HCT116 (cell line): ENCODE measurements at regions of chr3 and their contacts with region 1.

Region 1: DNA sequence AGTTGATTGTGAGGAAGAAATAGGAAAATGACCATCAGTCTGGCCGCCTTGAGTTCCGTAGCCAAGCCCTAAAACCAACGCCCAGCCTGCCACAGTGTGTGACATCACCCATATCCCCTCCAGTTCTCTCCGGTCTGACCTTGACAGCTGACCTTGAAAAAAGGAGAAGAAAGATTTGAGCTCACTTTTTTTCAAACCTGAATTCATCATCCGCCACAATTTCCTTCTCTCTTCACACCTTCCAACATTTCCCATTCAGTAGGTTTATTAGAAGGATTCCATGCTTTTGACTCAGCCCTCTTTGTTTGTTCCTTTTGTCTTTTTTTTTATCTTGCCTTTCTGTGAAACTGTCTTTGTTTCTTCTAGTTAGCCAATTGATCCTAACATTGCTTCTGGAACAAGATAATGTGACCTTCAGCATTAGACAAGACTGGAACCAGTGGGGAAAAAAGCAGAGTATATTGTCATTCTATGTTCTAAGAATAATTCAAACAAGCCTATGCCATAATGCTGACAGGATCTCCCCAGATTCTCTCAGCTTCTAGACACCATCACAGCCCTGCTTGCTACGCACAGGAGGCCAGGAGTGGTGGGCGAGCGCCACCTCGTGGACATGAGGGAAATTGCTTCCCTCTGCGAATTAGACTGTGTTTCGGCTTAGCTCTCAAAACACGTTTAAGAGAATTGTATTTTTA is 283.1 kb downstream of the FGF12 start:
- DNase-seq: peak; percentile 36
- ATAC-seq: peak; percentile 92
- H3K4me3 ChIP-seq: no peak overlapping the region
- H3K27ac ChIP-seq: no peak overlapping the region
- H3K4me1 ChIP-seq: no peaks in the 10 kb centered on the region
- H3K27me3 ChIP-seq: peaks cover 64% of the 10 kb centered on the region
- CTCF ChIP-seq: peak; percentile 71 to 99 (median 93)
- POLR2A ChIP-seq: no peak
- RAD21 ChIP-seq: peak; percentile 93

Region 2: DNA sequence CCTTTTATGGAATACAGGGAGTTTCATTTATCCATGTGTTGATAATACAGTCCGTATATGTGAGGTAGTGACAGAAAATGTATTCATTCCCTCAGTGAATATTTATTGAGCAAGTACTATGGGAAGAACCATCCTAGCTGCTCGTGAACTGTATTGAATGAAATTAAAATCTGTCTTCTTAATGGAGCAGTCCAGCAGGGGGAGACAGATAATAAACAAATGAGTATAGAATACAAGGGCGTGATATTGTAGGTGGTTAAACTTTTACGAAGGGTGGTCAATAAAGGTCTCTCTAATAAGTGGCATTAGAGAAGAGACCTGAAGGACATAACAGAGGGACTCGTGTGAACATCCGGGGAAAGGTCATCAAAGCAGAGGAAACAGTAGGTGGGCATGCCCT is 1307.9 kb before region 1 on chr3:
- CTCF ChIA-PET with region 1: interaction called, 4 read pairs
- POLR2A ChIA-PET with region 1: no interaction called
- RAD21 ChIA-PET with region 1: no interaction called
- intact Hi-C with region 1: loop called (anchors 10 kb)
- DNase-seq: peak; percentile 23
- ATAC-seq: peak; percentile 83
- H3K4me3 ChIP-seq: no peak overlapping the region
- H3K27ac ChIP-seq: no peak overlapping the region
- H3K4me1 ChIP-seq: peaks cover under 1 to 6% of the 10 kb centered on the region in 2 experiments; a peak in 3 of 4 replicates
- H3K27me3 ChIP-seq: no peaks in the 10 kb centered on the region
- CTCF ChIP-seq: peak; percentile 42 to 67 (median 54); a peak in 4 of 6 replicates
- POLR2A ChIP-seq: no peak
- RAD21 ChIP-seq: peak; percentile 76

Region 3: DNA sequence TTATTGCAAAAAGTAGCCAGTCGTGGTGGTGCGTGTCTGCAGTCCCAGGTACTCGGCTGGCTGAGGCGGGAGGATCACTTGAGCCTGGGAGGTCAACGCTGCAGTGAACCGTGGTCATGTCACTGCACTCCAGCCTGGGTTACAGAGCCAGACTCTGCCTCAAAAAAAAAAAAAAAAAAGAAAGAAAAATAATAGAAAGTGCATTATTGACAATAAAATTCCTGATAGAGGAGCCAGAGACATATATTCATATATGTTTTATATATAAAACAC is 1026.8 kb before region 1 on chr3:
- CTCF ChIA-PET with region 1: interaction called, 3 read pairs
- POLR2A ChIA-PET with region 1: no interaction called
- RAD21 ChIA-PET with region 1: no interaction called
- intact Hi-C with region 1: loop called (anchors 1 kb)
- DNase-seq: no peak
- ATAC-seq: no peak
- H3K4me3 ChIP-seq: no peak overlapping the region
- H3K27ac ChIP-seq: no peak overlapping the region
- H3K4me1 ChIP-seq: no peaks in the 10 kb centered on the region; a peak in 1 of 4 replicates
- H3K27me3 ChIP-seq: no peaks in the 10 kb centered on the region
- CTCF ChIP-seq: no peak
- POLR2A ChIP-seq: no peak
- RAD21 ChIP-seq: no peak

Region 4: DNA sequence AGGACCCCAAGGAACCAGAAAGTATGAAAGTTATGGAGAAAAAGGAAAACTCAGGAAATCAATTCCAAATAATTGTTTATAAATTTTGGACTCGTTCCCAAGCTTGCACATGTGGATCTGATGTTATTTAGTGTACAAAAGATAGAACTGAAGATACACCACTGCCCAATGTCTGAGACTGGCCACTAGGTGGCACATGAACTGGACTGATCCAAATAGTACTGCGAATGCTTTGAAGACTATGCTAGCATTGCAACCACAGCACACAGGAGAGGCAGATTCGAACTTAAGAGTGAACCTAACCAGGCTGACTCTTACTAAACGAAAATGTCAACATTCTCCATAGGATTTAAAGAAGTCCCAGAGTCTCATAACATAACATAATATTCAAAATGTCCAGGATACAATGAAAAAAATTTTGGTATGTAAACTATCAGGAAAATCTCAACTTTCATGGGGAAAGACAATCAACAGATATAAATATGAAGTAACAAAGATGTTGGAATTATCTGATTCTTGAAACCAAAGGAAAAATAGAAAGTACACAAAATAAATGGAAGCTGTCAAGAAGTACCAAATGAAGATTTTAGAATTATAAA is 313.6 kb before region 1 on chr3:
- CTCF ChIA-PET with region 1: interaction called, 6 read pairs
- POLR2A ChIA-PET with region 1: no interaction called
- RAD21 ChIA-PET with region 1: interaction called in 1 of 2 experiments, 3 read pairs
- intact Hi-C with region 1: loop called (anchors 2 kb)
- DNase-seq: peak; percentile 60
- ATAC-seq: peak; percentile 100
- H3K4me3 ChIP-seq: no peak overlapping the region
- H3K27ac ChIP-seq: no peak overlapping the region
- H3K4me1 ChIP-seq: no peaks in the 10 kb centered on the region
- H3K27me3 ChIP-seq: no peaks in the 10 kb centered on the region
- CTCF ChIP-seq: peak; percentile 42 to 85 (median 82); a peak in 5 of 6 replicates
- POLR2A ChIP-seq: no peak
- RAD21 ChIP-seq: peak; percentile 57

Region 5: GRCh38 chr3:192299921-192300320 is 144.3 kb before region 1 on chr3:
- CTCF ChIA-PET with region 1: no interaction called
- POLR2A ChIA-PET with region 1: no interaction called
- RAD21 ChIA-PET with region 1: no interaction called
- intact Hi-C with region 1: no loop called
- DNase-seq: no peak
- ATAC-seq: 0 out of 2 replicates have a peak, but pooled peaks have one; percentile 47
- H3K4me3 ChIP-seq: no peak overlapping the region
- H3K27ac ChIP-seq: no peak overlapping the region
- H3K4me1 ChIP-seq: no peaks in the 10 kb centered on the region
- H3K27me3 ChIP-seq: peaks cover 40% of the 10 kb centered on the region
- CTCF ChIP-seq: peak in 1 of 3 experiments; percentile 29; a peak in 2 of 6 replicates
- POLR2A ChIP-seq: no peak
- RAD21 ChIP-seq: no peak

Region 6: DNA sequence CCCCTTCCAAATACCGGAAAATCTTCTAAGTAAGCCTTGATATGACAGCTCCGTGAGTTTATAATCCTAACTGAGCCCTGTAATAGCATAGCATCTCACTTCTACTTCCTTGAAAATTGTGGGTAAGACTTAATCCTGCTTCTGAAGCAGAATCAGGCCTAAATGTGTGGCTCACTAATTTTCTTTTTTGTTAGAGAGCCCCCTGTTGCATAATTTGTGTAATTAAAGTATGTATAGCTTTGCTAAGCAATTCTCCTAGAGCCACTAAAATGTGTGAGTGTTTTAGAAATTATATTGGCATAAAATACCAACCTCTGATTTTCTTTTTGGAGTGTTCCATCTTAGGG is 21.3 kb before region 1 on chr3:
- CTCF ChIA-PET with region 1: interaction called, 23 read pairs
- POLR2A ChIA-PET with region 1: no interaction called
- RAD21 ChIA-PET with region 1: no interaction called
- intact Hi-C with region 1: no loop called
- DNase-seq: no peak
- ATAC-seq: peak; percentile 46; the same call in 1 of the 2 replicates
- H3K4me3 ChIP-seq: no peak overlapping the region
- H3K27ac ChIP-seq: no peak overlapping the region
- H3K4me1 ChIP-seq: no peaks in the 10 kb centered on the region
- H3K27me3 ChIP-seq: peaks cover 15% of the 10 kb centered on the region; the same call in 1 of the 2 replicates
- CTCF ChIP-seq: peak; percentile 23 to 57 (median 25); a peak in 4 of 6 replicates
- POLR2A ChIP-seq: no peak
- RAD21 ChIP-seq: peak; percentile 54

Region 7: DNA sequence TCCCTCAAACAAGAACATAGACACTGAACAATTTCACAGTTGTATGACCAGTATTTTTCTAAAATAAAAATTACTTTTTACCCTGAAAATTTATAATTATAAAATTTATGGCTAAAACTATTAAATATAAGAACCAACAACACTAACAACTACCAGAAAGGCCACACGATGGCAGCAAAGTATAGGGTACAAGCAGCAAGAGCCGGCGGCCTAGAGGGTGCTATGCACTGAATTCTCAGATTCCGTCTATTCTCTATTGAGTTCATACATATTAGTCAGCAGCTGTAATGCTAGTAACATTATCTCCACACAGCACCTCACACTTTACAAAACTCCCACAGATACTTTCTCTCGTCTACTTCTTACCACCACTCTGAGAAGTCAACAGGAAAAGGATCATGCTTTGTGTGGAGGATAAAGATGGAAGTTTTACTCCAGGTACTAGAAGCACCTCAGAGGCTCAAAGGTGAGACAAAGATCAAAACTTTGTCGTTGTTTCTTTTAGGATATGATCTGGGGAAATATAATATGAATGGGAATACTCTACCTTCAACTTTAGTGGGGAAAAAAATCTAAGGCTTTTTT is 122.6 kb after region 1 on chr3:
- CTCF ChIA-PET with region 1: no interaction called
- POLR2A ChIA-PET with region 1: no interaction called
- RAD21 ChIA-PET with region 1: no interaction called
- intact Hi-C with region 1: no loop called
- DNase-seq: peak; percentile 60
- ATAC-seq: peak; percentile 93
- H3K4me3 ChIP-seq: no peak overlapping the region
- H3K27ac ChIP-seq: no peak overlapping the region
- H3K4me1 ChIP-seq: no peaks in the 10 kb centered on the region
- H3K27me3 ChIP-seq: peaks cover 20% of the 10 kb centered on the region
- CTCF ChIP-seq: peak; percentile 48 to 96 (median 61)
- POLR2A ChIP-seq: no peak
- RAD21 ChIP-seq: peak; percentile 91